Activated CD4-positive, alpha-beta memory T cell treated with anti-CD3 and anti-CD28 coated beads for 36 hours (primary cell): ENCODE measurements at regions of chr9 and their contacts with region 1.

Region 1: DNA sequence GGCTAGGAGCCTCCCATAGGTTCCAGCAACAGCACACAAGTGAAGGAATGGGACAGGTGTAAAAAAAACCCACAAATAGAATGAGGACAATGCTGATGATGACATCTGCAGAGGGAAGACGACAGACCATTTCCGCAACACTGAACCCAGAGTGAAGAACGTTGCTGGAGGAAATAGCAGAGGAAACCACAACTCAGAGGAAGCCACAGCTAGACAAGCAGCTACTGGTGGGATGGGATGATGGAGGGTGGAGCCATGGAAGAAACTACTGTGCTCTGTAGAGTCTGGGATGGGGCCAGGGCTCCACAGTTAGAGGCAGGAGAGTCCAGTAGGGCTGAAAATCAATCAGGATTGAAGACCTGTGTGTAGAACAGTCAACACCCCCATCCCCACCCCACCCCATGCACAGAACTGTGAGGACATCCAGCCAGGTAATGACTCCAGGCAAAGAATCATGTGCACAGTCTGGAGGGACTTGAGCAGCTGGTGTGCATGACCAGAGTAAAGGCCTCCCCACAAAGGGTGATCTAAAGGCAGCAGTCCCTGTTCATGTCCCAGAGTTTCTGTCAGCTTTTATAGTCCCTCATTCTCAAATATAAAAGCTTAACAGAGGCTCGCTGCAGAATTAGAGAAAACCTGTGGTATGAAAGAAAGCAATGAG is 65.2 kb upstream of the SPIN1 start:
- DNase-seq: peak; percentile 68
- H3K4me3 Mint-ChIP-seq: no peak overlapping the region
- H3K27ac Mint-ChIP-seq: no peak overlapping the region
- H3K4me1 Mint-ChIP-seq: peaks cover 24% of the 10 kb centered on the region
- H3K27me3 Mint-ChIP-seq: peaks cover 4% of the 10 kb centered on the region

Region 2: GRCh38 chr9:88303721-88304451 is 19.1 kb before region 1 on chr9:
- CTCF ChIA-PET with region 1: no interaction called
- POLR2A ChIA-PET with region 1: interaction called, 4 read pairs
- intact Hi-C with region 1: loop called (anchors 1 kb)
- DNase-seq: peak; percentile 80
- H3K4me3 Mint-ChIP-seq: peak overlapping the region; percentile 33
- H3K27ac Mint-ChIP-seq: no peak overlapping the region
- H3K4me1 Mint-ChIP-seq: peaks cover 21% of the 10 kb centered on the region
- H3K27me3 Mint-ChIP-seq: peaks cover 26% of the 10 kb centered on the region

Region 3: DNA sequence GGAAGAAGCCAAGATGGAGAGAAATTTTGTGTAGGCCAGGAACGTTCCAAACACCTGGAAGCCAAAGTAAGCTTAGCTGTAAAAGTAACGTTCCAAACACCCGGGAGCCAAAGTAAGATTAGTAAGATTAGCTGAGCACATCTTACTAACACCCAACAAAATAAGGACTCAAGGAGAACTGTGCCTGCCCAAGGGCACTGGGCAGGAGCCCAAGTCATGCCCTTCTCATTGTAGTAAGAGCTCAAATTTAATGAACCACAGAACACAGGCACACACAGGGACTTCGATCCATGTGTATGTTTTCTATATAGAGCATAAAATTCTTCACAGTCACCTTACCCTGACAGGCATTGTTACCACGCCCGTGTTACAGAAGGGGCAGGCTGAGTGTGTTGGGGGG is 175.8 kb after region 1 on chr9:
- CTCF ChIA-PET with region 1: no interaction called
- POLR2A ChIA-PET with region 1: no interaction called
- intact Hi-C with region 1: no loop called
- DNase-seq: no peak
- H3K4me3 Mint-ChIP-seq: no peak overlapping the region
- H3K27ac Mint-ChIP-seq: no peak overlapping the region
- H3K4me1 Mint-ChIP-seq: no peaks in the 10 kb centered on the region
- H3K27me3 Mint-ChIP-seq: no peaks in the 10 kb centered on the region

Region 4: DNA sequence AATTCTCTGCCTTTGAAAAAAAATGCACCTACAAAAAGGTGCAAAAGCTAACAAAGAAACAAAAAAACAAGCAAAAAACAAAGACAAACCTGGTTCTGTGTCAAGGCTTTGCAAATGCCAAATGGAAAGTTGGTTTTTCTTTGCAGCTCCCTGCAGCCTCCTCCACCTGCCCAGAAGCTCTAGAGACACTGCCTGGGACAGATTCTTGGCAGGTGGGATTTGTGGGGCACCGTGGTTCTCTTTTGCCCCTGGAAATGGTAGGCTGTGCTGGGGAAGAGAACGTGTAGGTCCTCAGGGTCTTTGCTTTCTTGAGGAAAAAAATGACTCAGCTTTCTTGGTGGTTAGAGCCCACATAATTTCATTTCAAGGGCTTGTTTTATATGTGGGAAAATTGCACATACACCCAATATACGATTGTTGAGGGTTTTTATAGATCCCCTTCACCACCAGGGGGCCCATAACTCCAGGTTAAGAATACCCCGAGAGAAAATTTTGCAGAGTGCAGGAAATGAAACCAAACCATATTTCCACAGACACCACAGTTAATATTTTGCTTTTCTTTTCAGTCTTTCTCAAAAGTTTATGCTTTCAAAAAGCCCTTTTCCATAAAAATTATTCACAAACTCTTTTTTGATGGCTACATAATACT is 270.6 kb after region 1 on chr9:
- CTCF ChIA-PET with region 1: no interaction called
- POLR2A ChIA-PET with region 1: no interaction called
- intact Hi-C with region 1: no loop called
- DNase-seq: peak; percentile 49
- H3K4me3 Mint-ChIP-seq: no peak overlapping the region
- H3K27ac Mint-ChIP-seq: no peak overlapping the region
- H3K4me1 Mint-ChIP-seq: peaks cover 2% of the 10 kb centered on the region
- H3K27me3 Mint-ChIP-seq: peaks cover 14% of the 10 kb centered on the region